Upper lobe of right lung (tissue), 1 donor: ENCODE measurements at regions of chr15 and their contacts with region 1.

Region 1: DNA sequence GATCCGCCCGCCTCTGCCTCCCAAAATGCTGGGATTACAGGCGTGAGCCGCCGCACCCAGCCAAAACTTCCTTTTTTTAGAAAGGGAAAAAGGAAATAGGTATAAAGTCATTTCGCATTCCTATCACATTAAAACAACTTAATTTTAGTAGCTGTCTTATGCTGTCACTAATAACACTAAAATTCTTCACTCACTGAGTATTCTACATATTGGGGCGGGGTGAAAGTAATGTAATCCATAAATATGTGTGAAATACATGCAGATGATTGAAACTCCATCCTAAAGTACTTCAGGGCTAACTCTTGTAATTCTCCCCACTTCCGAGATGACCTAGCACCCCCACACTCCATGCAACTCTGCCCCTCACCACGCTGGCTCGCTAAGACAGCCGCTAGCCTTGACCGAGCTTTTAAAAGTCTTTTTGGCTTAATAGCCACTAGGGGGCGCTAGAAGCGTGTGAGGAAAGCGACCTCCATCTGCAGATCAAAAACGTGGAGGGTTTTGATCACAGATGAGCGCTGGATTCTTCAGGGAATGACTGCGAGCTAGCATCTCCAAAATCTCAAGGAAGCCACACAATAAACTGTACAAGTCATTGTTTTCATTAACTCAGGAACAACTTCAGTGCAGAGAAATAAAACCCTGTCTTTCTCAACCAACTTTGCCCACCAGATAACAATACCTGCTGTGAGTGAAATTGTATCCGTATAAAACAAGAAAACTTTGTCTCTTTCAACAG is 129.3 kb upstream of the IGF1R start:
- DNase-seq: no peak
- ATAC-seq: peak; percentile 91
- H3K4me3 ChIP-seq: no peak overlapping the region
- H3K27ac ChIP-seq: no peak overlapping the region
- H3K4me1 ChIP-seq: no peaks in the 10 kb centered on the region
- H3K27me3 ChIP-seq: no peaks in the 10 kb centered on the region
- CTCF ChIP-seq: peak; percentile 84

Region 2: GRCh38 chr15:98442379-98442833 is 76.6 kb before region 1 on chr15:
- intact Hi-C with region 1: no loop called
- DNase-seq: no peak
- ATAC-seq: peak; percentile 80
- H3K4me3 ChIP-seq: no peak overlapping the region
- H3K27ac ChIP-seq: no peak overlapping the region
- H3K4me1 ChIP-seq: no peaks in the 10 kb centered on the region
- H3K27me3 ChIP-seq: peaks cover 8% of the 10 kb centered on the region
- CTCF ChIP-seq: peak; percentile 78

Region 3: DNA sequence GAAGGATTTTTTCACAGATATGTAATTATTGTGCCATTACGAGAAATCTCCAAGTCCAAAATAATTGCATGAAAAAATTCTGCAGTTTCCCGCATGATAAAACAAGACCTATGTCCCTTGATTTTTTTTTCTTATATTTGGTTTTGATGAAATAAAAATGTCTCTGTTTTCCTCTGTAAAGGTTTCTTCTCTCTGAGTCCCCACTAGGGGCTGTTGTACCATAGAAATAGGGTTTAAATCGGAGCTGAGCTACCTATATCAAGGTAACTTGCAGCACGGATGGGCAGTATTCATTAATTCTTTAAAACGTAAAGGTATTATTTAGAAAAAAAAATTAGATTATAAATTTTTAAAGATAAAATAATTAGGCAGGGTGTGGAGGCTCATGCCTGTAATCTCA is 62.7 kb after region 1 on chr15:
- intact Hi-C with region 1: no loop called
- DNase-seq: no peak
- ATAC-seq: no peak
- H3K4me3 ChIP-seq: no peak overlapping the region
- H3K27ac ChIP-seq: no peak overlapping the region
- H3K4me1 ChIP-seq: no peaks in the 10 kb centered on the region
- H3K27me3 ChIP-seq: peaks cover 70% of the 10 kb centered on the region
- CTCF ChIP-seq: peak; percentile 13

Region 4: GRCh38 chr15:98658831-98659699 is 140.1 kb after region 1 on chr15:
- intact Hi-C with region 1: loop called (anchors 10 kb)
- DNase-seq: no peak
- ATAC-seq: peak; percentile 92
- H3K4me3 ChIP-seq: no peak overlapping the region
- H3K27ac ChIP-seq: no peak overlapping the region
- H3K4me1 ChIP-seq: peaks cover 11% of the 10 kb centered on the region
- H3K27me3 ChIP-seq: no peaks in the 10 kb centered on the region
- CTCF ChIP-seq: peak; percentile 86